ENCODE measurements at regions of chr6 and their contacts with region 1.

Region 1: DNA sequence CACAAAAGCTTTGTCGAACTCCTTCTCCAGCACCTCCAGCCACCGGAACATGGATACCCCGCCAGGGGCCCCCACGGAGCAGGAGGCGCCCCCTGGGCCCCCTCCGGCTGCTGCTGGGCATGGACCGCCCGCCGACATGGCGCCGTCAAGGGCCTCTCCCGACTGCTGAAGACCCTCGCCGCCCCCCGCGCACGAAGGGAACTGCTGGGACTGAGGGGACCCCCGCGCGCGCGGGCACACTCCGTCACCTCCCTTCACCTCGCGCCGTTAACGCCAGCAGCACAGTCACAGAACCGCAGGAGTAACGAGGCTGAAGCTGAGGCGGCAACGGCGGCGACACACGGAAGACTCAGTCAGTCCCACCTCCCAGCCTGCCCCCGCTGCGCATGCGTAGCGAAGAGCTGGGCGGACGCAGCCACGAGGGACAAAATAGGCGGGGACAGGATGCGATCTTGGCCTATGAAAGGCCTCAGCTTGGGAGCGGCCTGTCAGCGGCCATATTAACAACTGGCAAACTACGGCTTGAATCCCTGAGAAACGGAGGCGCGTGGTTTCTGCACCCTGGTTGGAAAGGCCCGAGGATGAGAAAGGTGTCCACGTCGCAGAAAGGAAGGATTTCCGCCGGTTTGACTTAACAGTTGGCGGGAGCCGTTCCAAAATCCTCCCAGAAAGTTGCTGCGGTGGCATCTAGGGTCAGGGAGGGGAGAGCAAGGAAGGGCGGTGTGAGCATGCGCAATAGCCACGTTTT is at the start of gene GOPC:
- DNase-seq: peak; percentile 94 to 97
- H3K4me3 ChIP-seq: peak within 1 kb of the TSS; percentile 58
- H3K27ac ChIP-seq: peak within 1 kb of the TSS; percentile 62
- H3K4me1 ChIP-seq: peaks cover 31% of the 10 kb centered on the region; the same call in 1 of the 2 replicates
- H3K27me3 ChIP-seq: no peaks in the 10 kb centered on the region
- CTCF ChIP-seq: 0 out of 2 replicates have a peak, but pooled peaks have one; percentile 33
- total RNA-seq, gene GOPC: 10.8 and 14.1 TPM in 2 replicates

Region 2: DNA sequence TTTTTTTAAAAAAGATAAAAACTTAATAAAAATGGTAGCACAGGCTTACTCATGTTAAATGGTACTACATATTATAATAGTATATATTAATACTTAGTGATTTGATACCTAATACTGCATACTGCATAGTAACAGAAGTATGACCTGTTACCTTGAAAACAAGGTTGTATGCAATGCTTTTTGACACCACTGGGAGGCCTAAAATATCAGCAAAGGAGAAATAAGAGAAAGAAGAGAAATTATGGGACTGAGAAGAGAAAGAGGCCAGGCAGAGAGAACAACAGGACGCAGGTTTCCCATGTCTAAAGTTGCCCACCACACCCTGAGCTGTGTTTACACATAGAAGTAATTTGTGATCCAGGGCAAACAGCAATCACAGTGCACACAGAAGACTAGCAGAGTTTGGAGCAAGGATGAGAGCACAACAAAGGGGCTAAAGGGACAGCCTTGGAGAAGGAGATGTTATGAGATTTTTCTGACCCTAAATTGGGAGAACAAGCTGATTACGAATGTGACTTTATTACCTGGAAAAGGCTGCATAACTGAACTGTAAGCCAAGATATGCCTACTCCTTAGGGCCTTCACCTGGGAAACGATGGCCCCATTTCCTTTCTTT is 249.8 kb before region 1 on chr6:
- CTCF ChIA-PET with region 1: no interaction called
- POLR2A ChIA-PET with region 1: interaction called, 5 read pairs
- intact Hi-C with region 1: loop called (anchors 1 kb)
- DNase-seq: no peak
- H3K4me3 ChIP-seq: no peak overlapping the region
- H3K27ac ChIP-seq: no peak overlapping the region
- H3K4me1 ChIP-seq: no peaks in the 10 kb centered on the region
- H3K27me3 ChIP-seq: no peaks in the 10 kb centered on the region
- CTCF ChIP-seq: peak; percentile 85

Region 3: GRCh38 chr6:117449549-117450439 is 152.5 kb before region 1 on chr6:
- CTCF ChIA-PET with region 1: interaction called, 8 read pairs
- POLR2A ChIA-PET with region 1: no interaction called
- intact Hi-C with region 1: loop called (anchors 1 kb)
- DNase-seq: peak; percentile 40 to 70
- H3K4me3 ChIP-seq: no peak overlapping the region
- H3K27ac ChIP-seq: peak overlapping the region; percentile 49; the same call in 1 of the 2 replicates
- H3K4me1 ChIP-seq: peaks cover 41% of the 10 kb centered on the region
- H3K27me3 ChIP-seq: no peaks in the 10 kb centered on the region
- CTCF ChIP-seq: peak; percentile 95

Region 4: DNA sequence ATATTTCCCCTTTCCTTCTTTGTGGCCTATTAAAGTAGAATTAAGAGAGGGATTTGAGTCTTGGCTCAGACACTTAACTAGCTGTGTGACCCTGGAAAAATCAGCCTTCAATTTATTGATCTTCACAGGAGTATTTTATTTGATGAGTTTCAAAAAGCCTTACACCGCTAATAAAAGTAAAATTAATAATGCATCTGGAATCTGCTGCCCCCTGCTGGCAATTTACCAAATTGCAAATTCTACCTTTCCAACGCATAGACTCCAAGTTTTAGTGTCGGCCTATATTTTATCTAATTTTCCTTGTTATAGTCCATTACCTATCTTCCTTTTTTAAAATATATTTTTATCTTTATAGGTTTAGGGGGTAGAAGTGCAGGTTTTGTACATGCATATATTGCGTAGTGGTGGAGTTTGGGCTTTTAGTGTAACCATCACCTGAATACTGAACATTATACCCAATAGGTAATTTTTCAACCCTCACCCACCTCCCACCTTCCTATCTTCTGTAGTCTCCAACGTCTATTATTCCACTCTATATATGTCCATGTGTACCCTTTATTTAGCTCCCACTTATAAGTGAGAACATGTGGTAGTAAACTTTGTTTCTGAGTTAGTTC is 46.3 kb before region 1 on chr6:
- CTCF ChIA-PET with region 1: interaction called, 3 read pairs
- POLR2A ChIA-PET with region 1: no interaction called
- intact Hi-C with region 1: loop called (anchors 5 kb)
- DNase-seq: peak in 1 of 2 experiments; percentile 41
- H3K4me3 ChIP-seq: no peak overlapping the region
- H3K27ac ChIP-seq: no peak overlapping the region
- H3K4me1 ChIP-seq: peaks cover 10% of the 10 kb centered on the region
- H3K27me3 ChIP-seq: no peaks in the 10 kb centered on the region
- CTCF ChIP-seq: peak; percentile 97

Region 5: GRCh38 chr6:118436482-118436881 is 834.2 kb after region 1 on chr6:
- CTCF ChIA-PET with region 1: no interaction called
- POLR2A ChIA-PET with region 1: no interaction called
- intact Hi-C with region 1: no loop called
- DNase-seq: peak in 1 of 2 experiments; percentile 16
- H3K4me3 ChIP-seq: no peak overlapping the region
- H3K27ac ChIP-seq: no peak overlapping the region
- H3K4me1 ChIP-seq: no peaks in the 10 kb centered on the region
- H3K27me3 ChIP-seq: no peaks in the 10 kb centered on the region
- CTCF ChIP-seq: no peak